ENCODE measurements at regions of chr12 and their contacts with region 1.

Region 1: GRCh38 chr12:100554608-100555077 is 18.8 kb upstream of the GAS2L3 start:
- DNase-seq: no peak

Region 2: DNA sequence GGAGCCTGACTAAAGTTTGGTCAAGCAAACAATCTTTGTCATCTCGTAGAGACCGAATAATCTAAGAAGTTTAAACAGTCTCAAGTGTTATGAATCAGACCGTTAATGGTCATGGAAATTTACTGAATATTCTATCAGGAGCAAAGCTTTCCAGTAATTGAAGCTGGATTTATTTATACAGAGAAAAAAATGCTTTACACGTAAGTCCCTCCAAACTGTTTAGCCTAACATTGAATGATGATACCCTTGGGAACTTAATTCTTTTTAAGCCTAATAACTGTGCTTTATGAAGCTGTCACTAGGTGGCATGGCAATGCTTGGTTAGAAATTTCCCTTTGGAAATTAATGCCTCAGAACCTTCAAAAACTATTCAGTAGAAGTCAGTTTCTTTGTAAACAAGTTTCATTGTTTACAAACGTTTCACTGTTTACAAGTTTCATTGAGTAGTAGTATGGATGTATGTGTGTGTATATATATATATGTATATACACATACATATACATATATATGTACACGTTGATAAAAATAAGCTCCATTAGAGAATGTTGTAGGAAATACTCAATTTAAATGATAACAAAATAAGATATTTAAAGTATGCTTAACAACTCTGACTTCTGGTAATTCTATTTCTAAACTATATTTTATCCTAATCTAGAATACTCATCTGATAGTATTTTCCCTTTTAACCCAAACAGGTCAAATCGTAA is 319.9 kb before region 1 on chr12:
- intact Hi-C with region 1: loop called (anchors 5 kb)
- DNase-seq: no peak

Region 3: GRCh38 chr12:100348657-100349454 is 205.8 kb before region 1 on chr12:
- intact Hi-C with region 1: loop called (anchors 5 kb)
- DNase-seq: no peak